MCF 10A (cell line): ENCODE measurements at regions of chr12 and their contacts with region 1.

Region 1: DNA sequence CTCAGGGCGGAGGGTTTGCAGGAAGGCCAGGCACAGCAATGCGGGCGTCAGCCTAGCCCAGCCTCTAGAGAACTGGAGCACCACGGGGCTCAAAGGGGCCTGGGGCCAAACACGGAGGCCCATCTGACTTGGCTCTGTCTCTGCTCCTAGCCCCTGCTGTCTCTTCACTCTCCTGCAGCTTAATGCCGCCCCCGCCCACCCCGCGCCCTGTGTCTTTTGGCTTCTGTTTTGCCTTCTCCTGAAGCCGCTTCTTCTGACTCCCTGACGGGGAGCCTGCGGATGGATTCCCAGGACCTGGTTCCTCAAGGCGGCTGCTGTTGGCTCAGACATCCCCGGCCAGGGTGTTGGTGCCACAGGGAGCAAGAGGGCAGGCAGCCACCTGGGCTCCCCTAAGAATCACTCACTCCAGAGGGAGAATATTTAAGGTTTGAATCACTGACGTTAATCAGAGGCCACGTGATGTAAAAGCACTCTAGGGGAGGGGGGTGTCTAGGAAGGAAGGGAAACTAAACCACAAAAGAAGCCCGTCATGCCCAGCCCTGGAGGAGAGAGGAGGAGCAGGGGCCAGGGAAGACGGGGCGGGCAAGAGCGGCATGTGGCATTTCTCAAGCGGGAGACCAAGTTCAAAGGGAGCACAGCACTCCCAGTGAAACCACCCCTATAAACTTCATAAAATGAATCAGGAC is 36.9 kb upstream of the PRMT8 start:
- DNase-seq: peak; percentile 98
- H3K4me3 Mint-ChIP-seq: peak overlapping the region; percentile 67
- H3K27ac Mint-ChIP-seq: peak overlapping the region; percentile 89
- H3K4me1 Mint-ChIP-seq: peaks cover 33% of the 10 kb centered on the region
- H3K27me3 Mint-ChIP-seq: no peaks in the 10 kb centered on the region
- CTCF ChIP-seq: no peak

Region 2: GRCh38 chr12:3313675-3314663 is 140.2 kb before region 1 on chr12:
- CTCF ChIA-PET with region 1: interaction called, 3 read pairs
- POLR2A ChIA-PET with region 1: interaction called, 4 read pairs
- intact Hi-C with region 1: loop called (anchors 1 kb)
- DNase-seq: no peak
- H3K4me3 Mint-ChIP-seq: no peak overlapping the region
- H3K27ac Mint-ChIP-seq: no peak overlapping the region
- H3K4me1 Mint-ChIP-seq: peaks cover 51% of the 10 kb centered on the region
- H3K27me3 Mint-ChIP-seq: no peaks in the 10 kb centered on the region
- CTCF ChIP-seq: peak; percentile 35

Region 3: GRCh38 chr12:3489057-3489456 is 34.9 kb after region 1 on chr12:
- CTCF ChIA-PET with region 1: interaction called, 3 read pairs
- POLR2A ChIA-PET with region 1: interaction called, 13 read pairs
- intact Hi-C with region 1: loop called (anchors 1 kb)
- DNase-seq: peak; percentile 81
- H3K4me3 Mint-ChIP-seq: peak overlapping the region; percentile 21
- H3K27ac Mint-ChIP-seq: peak overlapping the region; percentile 5
- H3K4me1 Mint-ChIP-seq: peaks cover 24% of the 10 kb centered on the region
- H3K27me3 Mint-ChIP-seq: peaks cover 23% of the 10 kb centered on the region
- CTCF ChIP-seq: no peak

Region 4: DNA sequence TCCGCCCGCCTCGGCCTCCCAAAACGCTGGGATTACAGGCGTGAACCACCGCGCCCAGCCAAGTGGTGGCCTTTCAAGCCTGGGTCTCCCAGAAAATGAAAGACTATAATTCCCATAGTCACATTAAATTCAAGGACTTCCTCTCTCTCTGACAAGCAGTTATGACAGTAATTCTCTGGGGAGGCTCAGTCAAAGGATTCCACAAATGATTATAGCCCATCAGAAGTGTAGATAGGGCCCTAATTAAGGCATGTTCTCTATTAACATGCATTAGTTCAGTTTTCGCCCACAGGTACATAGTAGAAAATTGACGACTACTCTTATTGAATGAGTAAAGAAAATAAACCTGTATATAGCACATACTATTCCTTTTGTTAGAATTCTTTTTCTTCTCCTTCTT is 53.2 kb after region 1 on chr12:
- CTCF ChIA-PET with region 1: no interaction called
- POLR2A ChIA-PET with region 1: no interaction called
- intact Hi-C with region 1: no loop called
- DNase-seq: no peak
- H3K4me3 Mint-ChIP-seq: no peak overlapping the region
- H3K27ac Mint-ChIP-seq: no peak overlapping the region
- H3K4me1 Mint-ChIP-seq: peaks cover 8% of the 10 kb centered on the region
- H3K27me3 Mint-ChIP-seq: no peaks in the 10 kb centered on the region
- CTCF ChIP-seq: no peak

Region 5: GRCh38 chr12:3520168-3520567 is 66.0 kb after region 1 on chr12:
- CTCF ChIA-PET with region 1: interaction called, 8 read pairs
- POLR2A ChIA-PET with region 1: interaction called, 5 read pairs
- intact Hi-C with region 1: loop called (anchors 1 kb)
- DNase-seq: peak; percentile 41
- H3K4me3 Mint-ChIP-seq: no peak overlapping the region
- H3K27ac Mint-ChIP-seq: no peak overlapping the region
- H3K4me1 Mint-ChIP-seq: peaks cover 9% of the 10 kb centered on the region
- H3K27me3 Mint-ChIP-seq: no peaks in the 10 kb centered on the region
- CTCF ChIP-seq: no peak